ENCODE measurements at regions of chr4 and their contacts with region 1.

Region 1: DNA sequence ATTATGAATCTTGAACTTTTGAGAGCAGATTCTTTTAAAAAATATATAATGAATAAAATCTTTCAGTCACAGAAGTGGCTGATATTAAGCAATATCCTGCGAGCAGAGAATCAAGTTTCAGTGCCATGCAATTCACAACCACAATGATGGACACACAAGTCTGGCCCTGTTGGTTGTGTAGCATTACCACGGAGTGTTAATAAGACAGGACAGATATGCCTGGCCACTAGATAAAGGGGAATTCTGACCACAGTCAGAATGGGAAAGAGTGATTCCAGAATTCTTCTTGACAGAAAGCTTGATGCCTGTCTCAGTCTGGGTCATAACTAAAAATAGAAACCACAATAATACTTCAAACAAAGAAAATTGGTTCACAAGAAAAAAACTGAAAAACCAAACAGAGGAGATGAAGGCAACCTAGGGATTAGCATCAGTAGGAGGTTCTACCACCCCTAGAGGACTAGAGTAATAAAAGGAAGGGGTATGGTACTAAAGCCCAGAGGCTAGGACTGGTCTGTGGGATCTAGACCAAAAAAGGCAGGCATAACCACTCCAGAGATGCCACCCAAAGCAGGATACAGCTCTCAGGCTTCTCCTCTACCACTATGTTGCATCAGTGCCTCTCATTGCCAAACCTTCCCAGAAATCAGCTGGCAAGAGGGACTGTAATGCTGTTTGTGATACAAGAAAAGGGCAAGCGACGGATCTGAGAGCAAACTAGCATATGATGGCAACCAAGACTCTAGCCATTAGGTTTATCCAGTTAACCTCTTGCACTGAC is 59.0 kb downstream of the RNF150 start:
- DNase-seq: peak in 3 of 5 donors; percentile 18 to 57 (median 42)
- ATAC-seq: peak; percentile 46 to 95 (median 77)
- H3K4me3 ChIP-seq: no peak overlapping the region
- H3K27ac ChIP-seq: peak overlapping the region in 7 of 12 donors; percentile 14 to 73 (median 53)
- H3K4me1 ChIP-seq: peaks cover 0 to 53% (median 14%) of the 10 kb centered on the region in 12 donors
- H3K27me3 ChIP-seq: no peaks in the 10 kb centered on the region
- CTCF ChIP-seq: no peak
- POLR2A ChIP-seq: no peak

Region 2: DNA sequence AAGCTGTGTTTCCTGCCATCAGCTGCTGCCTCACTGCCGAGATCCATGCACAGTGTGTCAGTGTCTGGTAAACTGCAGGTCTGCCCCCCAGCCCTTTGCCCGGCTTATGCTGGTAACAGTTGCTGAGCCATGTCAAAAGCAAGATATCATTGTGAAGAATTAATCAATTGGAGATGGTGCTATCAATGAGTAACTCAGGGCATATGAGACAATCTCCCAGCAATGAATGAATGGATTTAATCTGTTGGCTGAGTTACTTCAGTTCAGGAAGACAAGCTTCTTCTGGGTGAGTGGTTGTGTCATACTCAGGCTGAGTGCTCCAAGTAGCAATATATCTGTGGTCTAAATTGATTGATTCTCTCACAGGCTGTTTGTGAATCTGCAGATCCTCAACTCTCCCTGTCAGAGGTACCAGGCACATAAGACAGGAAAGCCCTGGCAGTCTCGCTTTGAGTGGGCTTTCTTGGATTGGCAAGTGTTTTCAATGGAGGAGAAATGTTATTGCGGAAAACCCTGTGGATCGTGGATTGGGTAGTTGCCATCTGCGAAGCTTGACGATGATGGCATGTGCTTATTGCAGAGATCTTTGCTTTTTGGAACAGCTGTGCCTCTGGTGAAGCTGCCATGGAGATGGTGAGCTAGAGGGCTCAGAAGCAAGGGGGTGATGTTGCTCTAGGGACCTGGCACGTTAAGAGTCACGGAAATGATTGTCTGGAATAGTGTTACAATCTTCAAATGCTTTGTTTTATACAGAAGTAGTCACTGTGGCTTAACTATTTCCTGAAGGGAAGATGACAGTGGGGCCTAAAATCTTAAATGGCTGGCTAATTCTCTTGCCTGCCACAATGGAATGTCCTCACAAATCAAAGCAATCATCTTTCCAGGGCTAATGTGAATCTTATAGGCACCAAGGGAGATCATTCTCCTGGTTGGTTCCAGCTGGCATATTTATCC is 170.5 kb before region 1 on chr4:
- intact Hi-C with region 1: no loop called
- DNase-seq: no peak
- ATAC-seq: no peak
- H3K4me3 ChIP-seq: no peak overlapping the region
- H3K27ac ChIP-seq: peak overlapping the region in 1 of 12 donors; percentile 17
- H3K4me1 ChIP-seq: peaks cover 0 to 44% (median 11%) of the 10 kb centered on the region in 12 donors
- H3K27me3 ChIP-seq: no peaks in the 10 kb centered on the region
- CTCF ChIP-seq: no peak
- POLR2A ChIP-seq: no peak

Region 3: DNA sequence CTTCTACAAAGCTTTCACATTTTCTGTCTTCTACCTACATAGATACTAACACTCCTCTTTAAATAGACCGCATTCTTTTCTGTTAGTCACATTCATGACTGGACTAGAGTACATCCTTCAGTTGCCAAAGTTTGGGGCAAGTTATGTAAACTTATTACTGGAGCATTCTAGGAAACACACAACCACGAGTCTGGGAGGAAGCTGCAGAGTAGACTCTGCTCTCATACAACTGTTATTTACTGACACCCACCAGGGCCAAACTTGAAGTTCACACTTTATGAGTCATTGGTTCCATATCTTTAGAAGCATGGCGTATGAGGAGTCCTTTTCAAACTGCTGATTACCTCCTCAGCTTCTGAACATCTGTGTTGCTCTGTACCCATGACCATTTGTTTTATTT is 28.0 kb before region 1 on chr4:
- intact Hi-C with region 1: no loop called
- DNase-seq: peak in 3 of 5 donors; percentile 25 to 44 (median 32)
- ATAC-seq: peak; percentile 89 to 97 (median 94)
- H3K4me3 ChIP-seq: no peak overlapping the region
- H3K27ac ChIP-seq: peak overlapping the region; percentile 6 to 78 (median 62)
- H3K4me1 ChIP-seq: peaks cover 0 to 32% (median 8%) of the 10 kb centered on the region in 12 donors
- H3K27me3 ChIP-seq: no peaks in the 10 kb centered on the region
- CTCF ChIP-seq: no peak
- POLR2A ChIP-seq: no peak

Region 4: DNA sequence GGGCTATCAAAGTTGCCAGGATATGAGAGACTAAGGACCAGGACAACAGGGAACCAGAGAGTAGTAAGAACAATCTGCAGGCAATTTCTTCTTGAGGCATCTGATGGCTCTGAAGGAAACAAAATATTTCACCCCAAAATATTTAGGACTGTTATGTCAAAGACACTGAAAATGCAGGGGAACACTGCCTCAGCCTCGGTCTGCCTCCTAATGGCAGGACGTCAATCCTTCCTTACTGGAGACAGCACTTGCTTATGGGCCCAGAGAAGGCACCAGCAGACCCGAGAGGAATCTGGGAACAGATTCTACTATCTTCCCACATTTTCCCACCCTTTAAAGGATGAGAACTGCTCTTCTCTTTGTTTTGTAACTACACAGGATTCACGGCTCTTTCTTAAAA is 35.7 kb after region 1 on chr4:
- intact Hi-C with region 1: loop called in 1 of 10 experiments (anchors 5 kb)
- DNase-seq: no peak
- ATAC-seq: peak in 1 of 4 donors; percentile 35
- H3K4me3 ChIP-seq: no peak overlapping the region
- H3K27ac ChIP-seq: peak overlapping the region in 1 of 12 donors; percentile 25
- H3K4me1 ChIP-seq: peaks cover 0 to 32% (median 3%) of the 10 kb centered on the region in 12 donors
- H3K27me3 ChIP-seq: no peaks in the 10 kb centered on the region
- CTCF ChIP-seq: peak in 1 of 12 donors; percentile 23
- POLR2A ChIP-seq: no peak